Endothelial cell of umbilical vein (primary cell): ENCODE measurements at regions of chr5 and their contacts with region 1.

Region 1: GRCh38 chr5:157540707-157541446 is 34.7 kb downstream of the ADAM19 start:
- DNase-seq: peak; percentile 79
- H3K4me3 ChIP-seq: no peak overlapping the region
- H3K27ac ChIP-seq: peak overlapping the region; percentile 72
- H3K4me1 ChIP-seq: peaks cover 20% of the 10 kb centered on the region
- H3K27me3 ChIP-seq: no peaks in the 10 kb centered on the region
- CTCF ChIP-seq: no peak
- POLR2A ChIP-seq: no peak

Region 2: DNA sequence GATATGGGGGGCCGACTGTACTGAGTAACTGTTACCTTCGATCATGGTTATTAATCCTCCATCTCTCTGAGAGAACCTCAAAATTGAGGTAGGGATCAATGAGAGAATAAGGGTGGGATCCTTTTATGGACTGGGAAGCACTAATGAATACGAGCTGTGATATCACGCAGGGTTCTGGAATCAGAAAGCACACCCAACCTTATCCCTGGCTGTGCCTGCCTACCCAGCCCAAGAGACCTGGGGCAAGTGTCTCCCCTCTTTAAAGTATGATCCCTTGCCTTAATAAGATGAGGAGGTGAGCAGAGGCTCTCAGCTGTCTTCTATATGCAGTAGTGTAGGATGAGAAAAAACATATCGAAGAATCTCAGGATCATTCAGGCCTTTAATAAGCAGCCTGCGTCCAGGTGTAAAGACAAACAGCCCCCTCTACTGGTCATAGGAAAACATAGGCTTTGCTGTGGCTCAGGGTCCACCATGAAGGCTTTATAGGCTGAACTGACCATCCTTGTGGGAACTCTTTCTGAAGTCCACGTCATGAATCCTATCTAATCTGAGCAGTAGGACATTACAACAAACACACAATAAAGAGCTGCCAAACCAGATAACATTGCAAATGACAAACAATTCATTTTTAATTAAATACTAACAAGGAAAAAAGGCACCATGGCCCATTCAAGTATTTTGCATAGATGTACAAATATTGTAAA is 64.0 kb before region 1 on chr5:
- CTCF ChIA-PET with region 1: no interaction called
- POLR2A ChIA-PET with region 1: no interaction called
- dilution Hi-C with region 1: no loop called
- intact Hi-C with region 1: no loop called
- DNase-seq: peak; percentile 67
- H3K4me3 ChIP-seq: no peak overlapping the region
- H3K27ac ChIP-seq: no peak overlapping the region
- H3K4me1 ChIP-seq: peaks cover 6% of the 10 kb centered on the region
- H3K27me3 ChIP-seq: peaks cover 0 to 2% of the 10 kb centered on the region in 2 experiments
- CTCF ChIP-seq: peak; percentile 73 to 77
- POLR2A ChIP-seq: no peak

Region 3: DNA sequence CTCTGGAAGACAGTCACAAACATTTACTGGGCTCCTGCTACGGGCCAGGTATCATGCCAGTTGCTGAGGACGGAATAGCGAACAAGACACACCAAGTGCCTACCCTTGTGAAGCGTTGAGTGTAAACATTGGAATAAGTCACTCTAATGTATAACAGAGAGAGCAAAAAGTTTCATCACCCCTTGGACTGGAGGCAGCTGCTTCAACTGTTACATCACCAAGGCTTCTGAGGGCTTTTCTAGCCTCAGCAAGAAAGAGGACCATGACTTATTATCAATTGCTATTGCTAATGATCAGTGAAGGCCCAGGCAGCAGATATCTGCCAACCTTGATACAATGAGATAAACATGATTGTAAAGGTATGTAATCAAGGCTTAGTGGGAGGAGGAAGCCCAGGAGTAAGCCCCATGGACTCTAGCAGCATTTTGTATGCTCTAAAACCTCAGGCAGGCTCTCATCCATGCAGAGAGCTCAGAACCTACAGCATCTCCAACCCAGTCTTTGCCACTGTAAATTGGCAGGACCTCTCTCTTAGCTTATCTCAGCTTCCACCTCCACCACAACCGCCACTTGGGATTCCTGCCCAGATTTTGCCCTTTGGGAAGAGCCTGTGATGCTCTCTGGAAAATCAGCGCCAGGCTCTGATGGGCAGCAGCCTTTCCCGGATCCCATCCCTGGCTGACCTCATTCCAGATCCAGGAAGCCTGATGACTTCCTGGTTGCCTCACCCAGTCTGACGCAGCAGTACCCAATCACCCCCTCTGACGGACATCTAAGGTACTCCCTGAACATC is 19.8 kb before region 1 on chr5:
- CTCF ChIA-PET with region 1: no interaction called
- POLR2A ChIA-PET with region 1: no interaction called
- dilution Hi-C with region 1: no loop called
- intact Hi-C with region 1: no loop called
- DNase-seq: no peak
- H3K4me3 ChIP-seq: no peak overlapping the region
- H3K27ac ChIP-seq: no peak overlapping the region
- H3K4me1 ChIP-seq: peaks cover 6% of the 10 kb centered on the region
- H3K27me3 ChIP-seq: no peaks in the 10 kb centered on the region
- CTCF ChIP-seq: peak; percentile 5 to 20
- POLR2A ChIP-seq: no peak

Region 4: DNA sequence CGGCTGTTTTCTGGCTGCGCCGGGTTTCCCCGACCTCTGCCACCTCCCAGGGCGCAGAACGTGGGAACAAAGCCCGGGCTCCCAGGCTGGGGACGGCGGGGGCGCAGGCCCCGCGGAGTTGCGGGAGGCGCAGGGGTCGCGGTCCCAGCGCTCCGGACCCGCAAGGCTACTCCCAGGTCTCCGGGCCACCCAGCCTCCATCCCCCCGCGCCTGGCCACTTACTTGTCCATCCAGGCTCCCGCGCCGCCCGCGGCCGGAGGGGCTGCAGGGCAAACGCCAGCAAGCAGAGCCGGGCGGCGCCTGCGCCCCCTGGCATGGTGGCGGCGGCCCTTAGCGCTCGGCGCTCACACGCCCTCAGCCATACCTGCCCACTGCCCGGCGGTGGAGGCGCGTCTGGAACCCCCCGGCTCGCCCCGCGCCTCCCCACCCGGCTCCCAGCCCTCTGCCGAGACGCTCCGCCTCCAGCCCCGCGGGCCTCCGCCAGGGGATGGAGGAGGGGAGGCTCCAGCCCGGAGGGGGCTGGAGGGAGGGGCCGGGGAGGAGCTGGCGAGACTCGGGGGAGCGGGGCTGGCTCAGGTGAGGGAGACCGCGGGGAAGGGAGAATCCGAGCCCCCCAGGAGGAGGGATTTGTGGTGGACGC is 34.6 kb after region 1 on chr5 and contains the start of gene ADAM19:
- CTCF ChIA-PET with region 1: no interaction called
- POLR2A ChIA-PET with region 1: no interaction called
- dilution Hi-C with region 1: no loop called
- intact Hi-C with region 1: loop called (anchors 1 kb)
- DNase-seq: peak; percentile 68
- H3K4me3 ChIP-seq: peak within 1 kb of the TSS; percentile 57 to 69 (median 63)
- H3K27ac ChIP-seq: peak within 1 kb of the TSS; percentile 25
- H3K4me1 ChIP-seq: peaks cover 10% of the 10 kb centered on the region
- H3K27me3 ChIP-seq: peaks cover 7% of the 10 kb centered on the region in 2 experiments
- CTCF ChIP-seq: no peak
- POLR2A ChIP-seq: peak; percentile 56
- total RNA-seq, gene ADAM19: 22.6 and 23.8 TPM in 2 replicates

Region 5: GRCh38 chr5:157748760-157749461 is 208.0 kb after region 1 on chr5:
- CTCF ChIA-PET with region 1: no interaction called
- POLR2A ChIA-PET with region 1: no interaction called
- dilution Hi-C with region 1: no loop called
- intact Hi-C with region 1: no loop called
- DNase-seq: no peak
- H3K4me3 ChIP-seq: no peak overlapping the region
- H3K27ac ChIP-seq: no peak overlapping the region
- H3K4me1 ChIP-seq: peaks cover 18% of the 10 kb centered on the region
- H3K27me3 ChIP-seq: no peaks in the 10 kb centered on the region
- CTCF ChIP-seq: no peak
- POLR2A ChIP-seq: no peak